CD4-positive, alpha-beta T cell (primary cell): ENCODE measurements at regions of chr17 and their contacts with region 1.

Region 1: DNA sequence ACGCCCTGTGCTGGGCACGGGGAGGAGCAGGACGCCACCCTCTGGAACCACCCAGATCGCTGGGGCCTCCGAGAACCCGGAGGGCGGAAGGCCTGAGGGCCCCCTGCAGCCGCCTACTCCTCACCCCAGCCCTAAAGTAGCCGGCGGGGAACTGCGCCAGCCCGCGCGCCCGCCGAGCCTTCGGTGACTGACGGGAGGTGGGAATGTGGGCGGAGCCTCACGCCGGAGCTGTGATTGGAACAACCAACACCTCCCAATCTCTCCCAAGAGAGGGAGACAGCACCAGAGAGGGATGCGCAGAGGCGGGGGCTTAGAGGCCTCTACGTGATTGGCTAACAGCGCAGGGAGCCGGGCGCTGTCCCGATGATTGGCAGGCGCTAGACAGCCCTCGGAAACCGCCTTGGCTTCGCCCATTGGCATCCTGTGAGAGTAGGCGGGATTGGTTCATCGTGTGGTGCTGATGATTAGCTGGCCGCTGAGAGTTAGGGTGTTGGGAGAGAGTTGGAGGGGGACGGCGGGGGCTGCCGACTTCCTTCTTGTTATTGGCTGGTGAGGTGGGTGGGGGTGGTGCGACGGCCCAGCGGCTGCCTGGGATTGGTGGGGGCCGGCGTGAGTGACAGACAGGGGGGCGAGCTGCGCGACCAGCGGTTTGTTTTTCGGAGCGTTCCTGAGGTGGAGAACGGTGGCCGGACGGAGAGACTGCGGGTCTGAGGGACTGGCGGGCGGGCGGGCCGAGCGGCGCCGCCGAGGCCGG is at the start of gene MAP3K3:
- DNase-seq: peak; percentile 91 to 100 (median 95)
- ATAC-seq: peak; percentile 90
- H3K4me3 ChIP-seq: peak within 1 kb of the TSS; percentile 72
- H3K4me3 Mint-ChIP-seq: peak within 1 kb of the TSS; percentile 99
- H3K27ac ChIP-seq: peak within 1 kb of the TSS; percentile 51 to 69
- H3K27ac Mint-ChIP-seq: peak within 1 kb of the TSS; percentile 88
- H3K4me1 ChIP-seq: peaks cover 25% of the 10 kb centered on the region
- H3K4me1 Mint-ChIP-seq: peaks cover 44% of the 10 kb centered on the region
- H3K27me3 ChIP-seq: no peaks in the 10 kb centered on the region
- H3K27me3 Mint-ChIP-seq: no peaks in the 10 kb centered on the region
- CTCF ChIP-seq: no peak
- total RNA-seq, gene MAP3K3: 75.8 to 78.1 TPM

Region 2: GRCh38 chr17:62916681-62917571 is 705.0 kb before region 1 on chr17:
- CTCF ChIA-PET with region 1: no interaction called
- POLR2A ChIA-PET with region 1: no interaction called
- intact Hi-C with region 1: no loop called
- DNase-seq: no peak
- ATAC-seq: no peak
- H3K4me3 ChIP-seq: no peak overlapping the region
- H3K4me3 Mint-ChIP-seq: no peak overlapping the region
- H3K27ac ChIP-seq: no peak overlapping the region
- H3K27ac Mint-ChIP-seq: no peak overlapping the region
- H3K4me1 ChIP-seq: no peaks in the 10 kb centered on the region
- H3K4me1 Mint-ChIP-seq: no peaks in the 10 kb centered on the region
- H3K27me3 ChIP-seq: no peaks in the 10 kb centered on the region
- H3K27me3 Mint-ChIP-seq: peaks cover 29% of the 10 kb centered on the region
- CTCF ChIP-seq: no peak

Region 3: GRCh38 chr17:63549946-63550807 is 71.8 kb before region 1 on chr17 and contains the start of gene DCAF7:
- CTCF ChIA-PET with region 1: interaction called, 3 read pairs
- POLR2A ChIA-PET with region 1: interaction called, 19 read pairs
- intact Hi-C with region 1: no loop called
- DNase-seq: peak; percentile 97 to 100 (median 99)
- ATAC-seq: peak; percentile 95
- H3K4me3 ChIP-seq: peak within 1 kb of the TSS; percentile 89
- H3K4me3 Mint-ChIP-seq: peak within 1 kb of the TSS; percentile 98
- H3K27ac ChIP-seq: peak within 1 kb of the TSS; percentile 90 to 91
- H3K27ac Mint-ChIP-seq: peak within 1 kb of the TSS; percentile 88
- H3K4me1 ChIP-seq: peaks cover 38% of the 10 kb centered on the region
- H3K4me1 Mint-ChIP-seq: peaks cover 52% of the 10 kb centered on the region
- H3K27me3 ChIP-seq: no peaks in the 10 kb centered on the region
- H3K27me3 Mint-ChIP-seq: no peaks in the 10 kb centered on the region
- CTCF ChIP-seq: no peak
- total RNA-seq, gene DCAF7: 11.3 to 11.9 TPM

Region 4: GRCh38 chr17:63634163-63634562 is 12.2 kb after region 1 on chr17:
- CTCF ChIA-PET with region 1: no interaction called
- POLR2A ChIA-PET with region 1: interaction called, 12 read pairs
- intact Hi-C with region 1: no loop called
- DNase-seq: no peak
- ATAC-seq: no peak
- H3K4me3 ChIP-seq: no peak overlapping the region
- H3K4me3 Mint-ChIP-seq: no peak overlapping the region
- H3K27ac ChIP-seq: no peak overlapping the region
- H3K27ac Mint-ChIP-seq: no peak overlapping the region
- H3K4me1 ChIP-seq: peaks cover 10% of the 10 kb centered on the region
- H3K4me1 Mint-ChIP-seq: peaks cover 66% of the 10 kb centered on the region
- H3K27me3 ChIP-seq: no peaks in the 10 kb centered on the region
- H3K27me3 Mint-ChIP-seq: no peaks in the 10 kb centered on the region
- CTCF ChIP-seq: no peak

Region 5: DNA sequence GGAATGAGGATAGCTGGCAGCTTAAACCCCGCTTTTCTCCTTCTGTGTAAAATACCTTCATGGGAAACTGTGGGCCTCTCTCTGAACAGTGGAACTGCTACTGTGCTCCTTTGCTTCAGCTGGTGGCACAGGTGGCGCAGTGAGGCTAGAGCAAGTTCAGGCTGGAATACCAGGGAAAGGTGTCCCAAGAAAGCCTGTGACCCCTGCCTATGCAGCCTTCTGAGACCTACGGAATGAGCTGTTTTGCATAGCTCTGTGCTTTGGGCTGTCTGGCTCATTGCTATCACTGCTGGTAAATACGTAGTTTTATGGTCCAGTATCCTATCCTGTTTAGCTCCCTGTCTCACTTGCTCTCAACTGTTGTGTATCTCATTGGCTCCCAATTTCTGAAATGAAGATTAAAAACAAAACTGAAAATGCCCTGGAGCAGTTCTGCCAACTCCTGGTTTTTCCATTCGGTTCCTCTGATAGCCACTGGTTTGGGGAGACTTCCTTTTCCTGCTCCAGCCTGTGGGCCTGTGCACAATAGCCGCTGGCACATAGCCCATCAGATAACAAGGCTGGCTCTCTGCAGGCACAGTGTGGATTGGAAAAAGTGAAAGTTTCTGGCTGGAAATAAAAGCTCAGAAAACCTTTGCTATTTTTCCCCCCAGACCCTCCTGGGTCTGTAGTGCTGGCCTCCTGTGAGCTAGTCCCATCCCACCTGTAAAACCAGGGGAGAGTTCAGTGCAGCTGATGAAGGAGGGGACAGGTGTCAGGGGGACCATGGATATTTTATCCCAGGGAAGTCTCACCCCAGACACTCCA is 53.9 kb after region 1 on chr17:
- CTCF ChIA-PET with region 1: no interaction called
- POLR2A ChIA-PET with region 1: no interaction called
- intact Hi-C with region 1: no loop called
- DNase-seq: no peak
- ATAC-seq: no peak
- H3K4me3 ChIP-seq: no peak overlapping the region
- H3K4me3 Mint-ChIP-seq: no peak overlapping the region
- H3K27ac ChIP-seq: no peak overlapping the region
- H3K27ac Mint-ChIP-seq: peak overlapping the region; percentile 49
- H3K4me1 ChIP-seq: no peaks in the 10 kb centered on the region
- H3K4me1 Mint-ChIP-seq: peaks cover 18% of the 10 kb centered on the region
- H3K27me3 ChIP-seq: no peaks in the 10 kb centered on the region
- H3K27me3 Mint-ChIP-seq: no peaks in the 10 kb centered on the region
- CTCF ChIP-seq: no peak

Region 6: DNA sequence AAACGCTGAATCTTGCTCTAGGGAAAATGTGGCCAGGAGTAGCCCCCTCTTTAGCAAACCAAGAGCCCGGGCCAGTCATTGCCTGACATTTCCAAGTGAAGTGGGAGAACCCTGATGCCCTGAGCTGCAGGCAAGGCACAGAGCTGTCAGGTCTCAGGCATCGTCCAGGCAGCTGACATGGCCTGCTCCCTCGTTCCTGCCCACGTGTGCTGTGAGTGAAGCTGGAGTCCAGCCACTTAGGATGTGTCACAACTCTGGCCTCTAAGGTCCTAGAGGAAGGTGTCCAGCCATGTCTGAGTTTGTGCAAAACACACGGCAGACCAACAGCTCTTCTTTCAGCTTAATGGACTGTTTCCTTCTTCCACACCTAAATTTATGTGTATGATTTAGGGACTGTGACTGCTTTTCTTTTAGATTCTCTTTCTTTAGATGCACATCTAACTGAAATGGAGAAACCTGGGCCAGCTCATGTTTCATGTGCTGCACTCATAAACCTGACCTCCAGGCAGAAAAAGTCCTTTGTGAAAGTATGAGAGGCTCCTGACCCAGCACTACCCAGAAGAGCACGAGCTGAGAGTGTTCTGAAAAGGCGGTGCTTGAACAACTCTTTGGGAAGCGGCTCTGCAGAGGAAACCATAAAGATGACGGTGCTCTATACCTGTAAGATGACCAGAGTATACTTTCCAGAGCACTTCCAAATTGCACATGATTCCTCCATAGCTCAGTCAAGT is 92.8 kb after region 1 on chr17:
- CTCF ChIA-PET with region 1: interaction called, 6 read pairs
- POLR2A ChIA-PET with region 1: interaction called, 13 read pairs
- intact Hi-C with region 1: loop called in 1 of 2 experiments (anchors 5 kb)
- DNase-seq: no peak
- ATAC-seq: no peak
- H3K4me3 ChIP-seq: no peak overlapping the region
- H3K4me3 Mint-ChIP-seq: no peak overlapping the region
- H3K27ac ChIP-seq: no peak overlapping the region
- H3K27ac Mint-ChIP-seq: no peak overlapping the region
- H3K4me1 ChIP-seq: peaks cover 13% of the 10 kb centered on the region
- H3K4me1 Mint-ChIP-seq: peaks cover 12% of the 10 kb centered on the region
- H3K27me3 ChIP-seq: no peaks in the 10 kb centered on the region
- H3K27me3 Mint-ChIP-seq: no peaks in the 10 kb centered on the region
- CTCF ChIP-seq: no peak

Region 7: DNA sequence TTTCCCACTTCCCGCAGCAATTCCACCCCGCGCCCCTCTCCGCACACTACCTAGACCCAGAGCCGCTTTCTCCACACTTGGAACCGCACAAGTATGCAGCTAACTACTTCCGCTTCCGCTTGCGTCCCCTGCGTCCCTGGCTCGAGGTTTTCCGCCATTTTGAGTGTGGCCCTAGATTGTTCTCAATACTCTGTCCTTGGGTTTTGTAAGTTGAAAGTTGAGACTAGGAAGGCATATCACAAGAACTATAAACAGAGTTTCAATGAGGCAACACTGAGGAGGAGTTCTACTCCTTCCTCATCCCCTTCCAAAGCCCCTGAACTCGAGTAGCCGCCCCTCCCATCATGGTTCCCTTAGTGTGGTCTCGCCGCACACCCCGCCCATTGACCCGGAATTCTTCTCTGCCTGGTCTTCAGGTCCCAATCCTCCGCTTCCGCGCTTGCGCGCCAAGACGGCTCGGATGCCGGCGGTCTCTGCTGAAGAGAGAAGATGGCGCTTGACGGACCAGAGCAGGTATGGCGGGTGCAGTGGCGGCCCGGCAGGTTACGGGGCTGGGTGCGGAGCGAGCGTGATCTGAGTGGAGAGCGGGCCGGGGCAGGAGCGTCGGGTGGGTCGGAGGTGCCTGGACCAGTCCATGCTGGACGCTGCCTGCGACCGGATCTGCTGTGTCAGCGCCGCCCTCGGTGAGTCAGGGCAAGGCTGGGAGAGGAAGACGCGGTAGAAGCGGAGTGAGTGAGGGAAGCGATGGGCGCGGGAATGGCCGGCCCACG is 205.2 kb after region 1 on chr17 and contains the starts of genes FTSJ3 and PSMC5:
- CTCF ChIA-PET with region 1: no interaction called
- POLR2A ChIA-PET with region 1: interaction called, 4 read pairs
- intact Hi-C with region 1: loop called in 1 of 2 experiments (anchors 5 kb)
- DNase-seq: peak; percentile 91 to 98 (median 95)
- ATAC-seq: peak; percentile 93
- H3K4me3 ChIP-seq: peak within 1 kb of the TSS; percentile 83
- H3K4me3 Mint-ChIP-seq: peak within 1 kb of the TSS; percentile 94
- H3K27ac ChIP-seq: peak within 1 kb of the TSS; percentile 77 to 96
- H3K27ac Mint-ChIP-seq: peak within 1 kb of the TSS; percentile 96
- H3K4me1 ChIP-seq: peaks cover 69% of the 10 kb centered on the region
- H3K4me1 Mint-ChIP-seq: peaks cover 75% of the 10 kb centered on the region
- H3K27me3 ChIP-seq: no peaks in the 10 kb centered on the region
- H3K27me3 Mint-ChIP-seq: no peaks in the 10 kb centered on the region
- CTCF ChIP-seq: peak; percentile 65
- total RNA-seq, gene FTSJ3: 47.6 to 51.1 TPM
- total RNA-seq, gene PSMC5: 83.1 to 84.6 TPM